OCI-LY7 (cell line): ENCODE measurements at regions of chr9 and their contacts with region 1.

Region 1: DNA sequence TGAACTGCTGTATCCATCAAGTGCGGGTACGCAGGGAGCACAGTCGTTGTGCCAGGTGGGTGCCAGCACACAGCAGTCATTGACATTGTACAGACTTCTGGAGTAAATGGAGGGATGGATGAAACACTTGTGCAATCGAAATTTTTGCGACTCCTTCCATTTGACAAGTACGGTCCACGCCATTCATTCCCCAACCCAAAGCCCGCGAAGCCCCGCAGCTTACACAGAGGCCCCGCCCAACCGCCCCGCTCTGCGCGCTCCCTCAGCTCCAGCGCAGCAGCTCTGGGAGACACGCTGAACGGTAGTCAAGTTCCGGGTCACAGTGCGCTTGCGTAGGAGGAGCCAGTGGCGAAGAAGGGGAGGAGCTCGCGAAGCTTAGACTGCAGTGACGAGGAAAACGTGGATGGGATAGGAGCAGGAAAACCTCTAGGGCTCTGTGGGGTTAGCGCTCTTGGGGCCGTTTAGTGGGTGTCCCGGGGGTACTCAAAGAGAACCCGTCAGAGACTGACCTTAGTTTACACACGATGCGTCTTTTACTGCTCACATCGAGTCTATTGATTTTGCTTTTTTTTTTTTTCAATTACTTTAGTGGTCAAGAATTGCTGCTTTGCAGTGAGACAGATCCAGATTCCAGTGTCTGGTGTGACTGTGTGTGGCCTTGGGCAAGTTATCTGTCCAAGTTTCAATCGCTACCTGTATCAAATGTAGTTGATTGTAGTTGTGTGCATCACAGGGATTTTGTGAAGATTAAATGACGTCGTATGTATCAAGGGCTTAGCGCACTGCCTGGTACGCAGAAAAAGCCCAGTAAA is 15.3 kb upstream of the MSANTD3 start:
- DNase-seq: peak; percentile 94
- H3K4me3 ChIP-seq: peak overlapping the region; percentile 66
- H3K27ac ChIP-seq: no peak overlapping the region
- H3K4me1 ChIP-seq: peaks cover 18% of the 10 kb centered on the region
- CTCF ChIP-seq: no peak

Region 2: DNA sequence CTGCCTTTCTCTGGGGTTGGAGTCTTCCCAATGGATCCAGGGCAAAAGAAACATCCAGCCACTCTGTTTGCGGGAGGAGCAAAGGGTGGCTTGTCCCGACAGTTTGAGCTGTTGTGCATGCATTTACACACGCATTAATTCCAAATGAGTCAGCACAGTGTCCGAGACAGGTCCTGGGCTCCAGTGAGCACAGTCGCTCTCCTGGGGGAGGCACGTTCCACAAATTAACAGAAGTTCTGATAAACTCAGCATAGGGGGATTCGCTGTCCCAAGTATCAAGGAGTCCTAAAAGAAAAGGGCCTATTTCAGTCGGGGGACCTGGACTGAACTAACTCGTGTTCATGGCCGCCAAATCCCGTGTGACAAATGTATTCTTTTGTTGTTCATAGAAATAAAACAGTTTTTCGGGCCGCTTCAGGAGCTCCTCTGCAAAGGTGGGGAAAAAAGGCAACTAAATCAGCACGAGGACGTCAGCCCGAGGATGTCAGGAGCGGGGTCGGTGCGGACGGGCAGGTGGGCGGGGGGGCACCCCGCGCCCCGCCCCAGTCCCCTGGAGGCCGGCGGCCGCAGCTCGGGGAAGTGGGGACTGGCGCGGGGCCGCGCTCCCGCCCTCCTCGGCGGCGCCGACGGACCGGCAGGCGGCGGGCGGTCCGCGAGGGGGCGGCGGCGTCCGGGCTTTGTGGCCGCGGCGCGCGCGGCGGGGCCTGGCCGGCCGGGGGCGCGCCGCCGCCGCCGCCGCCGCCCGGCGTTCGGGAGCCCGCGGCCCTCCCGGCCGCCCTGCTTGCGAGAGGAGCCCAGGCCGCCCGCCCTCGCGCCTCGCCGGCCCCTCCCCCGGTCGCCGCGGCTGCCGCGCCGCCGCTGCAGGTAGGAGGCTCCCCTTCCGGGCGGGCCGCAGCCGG is 15.1 kb after region 1 on chr9 and contains the start of gene MSANTD3:
- CTCF ChIA-PET with region 1: interaction called, 10 read pairs
- POLR2A ChIA-PET with region 1: interaction called, 21 read pairs
- intact Hi-C with region 1: no loop called
- DNase-seq: peak; percentile 81
- H3K4me3 ChIP-seq: peak within 1 kb of the TSS; percentile 91
- H3K27ac ChIP-seq: peak within 1 kb of the TSS; percentile 59
- H3K4me1 ChIP-seq: peaks cover 20% of the 10 kb centered on the region
- CTCF ChIP-seq: no peak
- total RNA-seq, gene MSANTD3: 38.0 and 51.7 TPM in 2 replicates

Region 3: GRCh38 chr9:100601216-100601615 is 189.5 kb after region 1 on chr9:
- CTCF ChIA-PET with region 1: no interaction called
- POLR2A ChIA-PET with region 1: no interaction called
- intact Hi-C with region 1: no loop called
- DNase-seq: peak; percentile 72
- H3K4me3 ChIP-seq: no peak overlapping the region
- H3K27ac ChIP-seq: no peak overlapping the region
- H3K4me1 ChIP-seq: peaks cover 7% of the 10 kb centered on the region
- CTCF ChIP-seq: peak; percentile 86